Astrocyte of the cerebellum (primary cell): ENCODE measurements at regions of chr12 and their contacts with region 1.

Region 1: DNA sequence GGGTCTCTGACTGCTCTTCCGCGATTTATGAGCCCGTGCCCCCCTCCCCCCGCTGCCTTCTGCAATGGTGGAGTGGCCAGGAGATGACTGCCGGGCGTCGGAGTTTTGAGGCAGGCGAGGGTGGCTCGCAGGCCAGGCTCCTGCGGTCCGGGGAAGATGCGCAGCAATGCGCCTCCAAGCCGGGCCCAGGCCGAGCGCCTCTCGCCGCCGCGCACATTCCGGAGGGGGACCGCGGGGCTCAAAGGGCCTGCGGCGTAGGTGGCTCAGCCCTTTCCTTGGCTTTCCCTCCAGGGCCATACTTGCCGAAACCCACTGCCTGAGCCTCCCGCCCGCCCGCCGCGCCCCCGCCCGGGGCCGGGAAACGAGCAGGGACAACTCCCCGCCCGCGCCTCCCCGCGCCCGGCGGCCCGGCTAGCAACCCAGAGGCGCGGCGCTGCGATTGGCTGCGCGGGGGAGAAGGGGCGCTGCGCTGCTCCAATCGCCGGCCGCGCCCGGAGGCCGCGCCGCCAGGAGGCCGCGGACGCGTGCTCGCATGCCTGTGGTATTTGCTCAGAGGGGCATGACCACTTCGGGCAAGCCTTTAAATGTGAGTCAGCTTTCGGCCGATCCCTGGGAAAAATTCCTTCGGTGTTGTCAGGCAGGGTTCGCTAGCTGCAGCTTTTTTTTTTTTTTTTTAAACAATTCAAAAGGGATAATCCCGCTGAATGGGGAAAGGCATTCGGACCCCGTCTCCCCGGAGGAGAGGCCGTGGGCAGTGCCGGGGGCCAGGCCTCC is 157.9 kb upstream of the PARP11 start:
- DNase-seq: peak; percentile 94
- H3K4me3 ChIP-seq: peak overlapping the region; percentile 19
- CTCF ChIP-seq: no peak

Region 2: DNA sequence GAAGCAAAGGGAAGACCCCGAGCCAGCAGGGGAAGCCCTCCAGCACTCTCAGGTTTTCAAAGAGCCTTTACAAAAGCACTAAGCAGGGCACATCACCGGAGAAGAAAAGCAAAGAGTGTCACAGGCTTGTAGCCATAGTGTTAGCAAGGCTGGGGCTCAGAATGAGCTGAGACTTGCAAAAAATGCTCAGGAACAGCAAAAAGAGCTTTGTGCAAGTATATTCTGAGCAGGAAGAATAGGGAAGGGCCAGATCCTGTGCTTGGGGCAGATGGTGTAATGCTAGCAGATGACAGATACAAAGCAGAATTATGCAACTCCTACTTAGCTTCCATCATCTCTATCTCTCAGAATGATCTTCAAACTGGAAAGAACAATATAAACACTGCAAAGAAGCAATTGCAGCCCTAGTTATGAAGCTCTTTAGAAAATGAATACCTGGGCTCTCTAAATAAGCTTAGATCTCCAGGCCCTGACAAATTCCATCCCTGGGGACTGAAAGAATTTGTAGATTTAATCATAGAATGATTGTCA is 134.2 kb before region 1 on chr12:
- in situ Hi-C with region 1: loop called (anchors 10 kb)
- DNase-seq: no peak
- H3K4me3 ChIP-seq: no peak overlapping the region
- CTCF ChIP-seq: no peak

Region 3: DNA sequence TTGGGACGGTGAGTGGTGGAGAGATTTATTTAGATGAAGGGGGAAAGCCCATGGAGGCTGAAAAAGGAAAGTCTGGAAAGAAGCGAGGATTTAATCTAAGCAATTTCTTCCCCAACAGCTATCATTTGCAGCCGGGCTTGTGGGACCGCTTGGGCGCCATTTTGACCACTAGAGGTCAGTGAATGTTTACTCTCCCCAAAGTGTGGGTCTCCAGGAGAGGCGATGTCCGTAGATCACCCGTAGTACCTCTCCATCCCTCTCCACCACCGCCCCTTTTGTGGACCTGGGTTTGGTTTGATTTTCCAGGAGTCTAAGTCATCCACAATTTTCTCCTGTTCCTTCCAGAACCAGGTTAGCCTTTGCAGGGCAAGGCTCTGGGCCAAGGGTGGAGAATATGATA is 66.7 kb before region 1 on chr12:
- in situ Hi-C with region 1: no loop called
- DNase-seq: no peak
- H3K4me3 ChIP-seq: no peak overlapping the region
- CTCF ChIP-seq: no peak

Region 4: GRCh38 chr12:4107436-4107878 is 76.3 kb after region 1 on chr12:
- in situ Hi-C with region 1: no loop called
- DNase-seq: no peak
- H3K4me3 ChIP-seq: no peak overlapping the region
- CTCF ChIP-seq: peak; percentile 24